ENCODE measurements at regions of chr6 and their contacts with region 1.

Region 1: DNA sequence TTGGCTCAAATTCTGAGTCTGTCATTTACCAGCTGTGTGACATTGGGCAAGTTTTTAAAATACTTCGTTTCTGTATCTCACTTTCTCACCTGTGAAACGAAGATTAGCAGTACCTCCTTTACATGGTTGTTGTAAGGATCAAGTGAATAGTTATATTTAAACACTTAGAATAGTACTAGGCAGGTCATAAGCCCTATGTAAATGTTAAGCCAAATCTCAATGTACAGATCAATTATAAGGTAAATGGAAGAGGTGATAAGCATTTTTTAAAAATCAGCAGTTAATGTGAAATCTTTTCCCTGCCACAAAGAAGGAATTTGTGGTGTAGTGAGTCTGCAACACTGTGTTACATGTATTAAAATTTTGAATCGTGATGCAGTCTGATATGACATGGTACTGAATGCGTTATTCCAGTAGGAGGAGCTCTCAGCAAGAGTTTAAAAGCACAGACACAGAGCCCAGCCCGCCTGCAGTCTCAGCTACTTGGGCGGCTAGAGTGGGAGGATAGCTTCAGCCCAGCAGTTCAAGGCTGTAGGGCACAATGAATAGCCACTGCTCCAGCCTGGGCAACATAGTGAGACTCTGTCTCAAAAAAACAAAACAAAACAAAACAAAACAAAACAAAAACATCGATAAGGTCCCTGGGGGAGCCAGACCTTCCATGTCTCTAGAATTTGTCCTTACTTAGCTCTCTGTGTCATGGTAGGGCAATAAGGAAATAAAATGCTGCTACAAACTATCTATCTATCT is 46.0 kb downstream of the GTF2H5 start:
- DNase-seq: peak; percentile 23 to 94 (median 66)

Region 2: GRCh38 chr6:157841211-157841840 is 372.8 kb before region 1 on chr6:
- intact Hi-C with region 1: no loop called
- DNase-seq: no peak

Region 3: DNA sequence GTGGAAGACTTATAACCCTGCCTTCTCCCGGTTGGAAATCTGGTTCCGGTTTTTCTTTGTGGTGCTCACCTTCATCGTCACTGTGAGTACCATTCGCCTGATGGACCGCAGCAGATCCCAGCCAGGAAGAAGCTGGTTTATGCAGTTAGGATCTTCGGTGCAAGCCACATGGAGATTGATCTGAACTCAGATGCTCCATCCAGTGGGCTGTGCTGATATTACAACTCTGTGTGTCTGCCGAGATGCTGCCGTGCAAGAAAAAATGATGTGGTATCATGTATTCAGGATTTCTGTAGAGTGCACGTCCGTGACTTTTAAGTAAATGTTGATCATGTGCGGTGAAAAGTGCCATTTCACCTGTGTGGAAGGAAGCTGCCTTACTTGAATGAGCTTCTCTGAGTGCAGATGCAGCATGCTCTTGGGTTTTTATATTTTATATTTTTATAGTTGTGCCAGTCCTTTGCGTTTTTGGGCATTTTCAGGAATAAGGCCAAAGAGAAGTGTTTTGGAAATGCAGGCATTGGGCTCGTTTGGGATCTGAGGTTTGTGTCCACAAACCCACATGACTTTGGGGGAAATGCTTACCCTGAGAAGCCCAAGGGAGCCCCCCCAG is 391.3 kb after region 1 on chr6:
- intact Hi-C with region 1: loop called (anchors 2 kb)
- DNase-seq: peak in 8 of 10 donors; percentile 25 to 90 (median 67)

Measured in posterior cingulate gyrus (tissue), 11 donors.